ENCODE measurements at regions of chr11 and their contacts with region 1.

Region 1: DNA sequence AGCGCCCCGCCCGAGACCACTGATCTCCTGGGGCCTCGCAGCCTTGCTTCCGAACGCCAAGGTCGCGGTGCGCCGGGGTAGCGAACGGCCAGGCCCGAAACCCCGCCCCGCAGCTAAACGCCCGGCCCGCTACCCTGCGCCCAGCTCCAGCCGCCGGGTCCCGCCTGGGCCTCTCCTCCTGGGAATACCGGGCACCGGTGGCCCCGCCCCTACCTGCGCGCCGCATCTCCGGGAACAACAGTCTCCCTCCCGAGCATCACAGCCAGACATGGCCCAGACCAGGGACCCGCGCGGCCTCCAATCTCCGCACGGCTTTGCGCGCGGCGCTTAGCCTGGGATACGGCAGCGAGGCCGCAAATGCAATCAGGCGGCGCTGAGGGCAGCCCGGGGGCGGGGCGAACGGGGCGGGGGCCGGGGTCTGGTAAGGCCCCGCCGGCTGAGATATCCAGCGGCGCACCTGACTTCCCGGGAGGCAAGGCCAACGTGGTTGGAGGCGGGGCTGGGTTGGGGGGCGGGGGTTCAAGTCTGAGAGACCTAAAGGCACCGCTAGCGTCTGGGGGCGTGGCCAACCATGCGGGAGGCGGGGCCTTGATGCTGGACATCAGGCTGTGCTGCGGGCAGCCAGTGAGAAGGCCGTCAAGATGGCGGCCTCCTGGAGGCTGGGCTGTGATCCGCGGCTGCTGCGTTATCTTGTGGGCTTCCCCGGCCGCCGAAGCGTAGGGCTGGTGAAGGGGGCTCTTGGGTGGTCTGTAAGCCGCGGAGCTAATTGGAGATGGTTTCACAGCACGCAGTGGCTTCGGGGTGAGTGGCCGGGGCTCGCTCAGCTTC is at the starts of genes APIP and PDHX:
- DNase-seq: peak; percentile 77 to 97 (median 83)
- ATAC-seq: peak; percentile 94
- H3K4me3 ChIP-seq: peak within 1 kb of the TSS; percentile 87
- H3K4me3 Mint-ChIP-seq: peak within 1 kb of the TSS; percentile 90 to 99 (median 96)
- H3K27ac ChIP-seq: peak within 1 kb of the TSS; percentile 92
- H3K27ac Mint-ChIP-seq: peak within 1 kb of the TSS; percentile 86 to 98 (median 95)
- H3K4me1 ChIP-seq: peaks cover 9 to 18% of the 10 kb centered on the region in 2 donors
- H3K4me1 Mint-ChIP-seq: peaks cover 36 to 71% (median 57%) of the 10 kb centered on the region in 7 donors
- H3K27me3 ChIP-seq: no peaks in the 10 kb centered on the region
- H3K27me3 Mint-ChIP-seq: no peaks in the 10 kb centered on the region
- total RNA-seq, gene APIP: 8.2 to 23.6 (median 17.7) TPM
- total RNA-seq, gene PDHX: 20.0 to 54.1 (median 28.8) TPM

Region 2: GRCh38 chr11:33773987-33774735 is 1142.1 kb before region 1 on chr11 and contains the start of gene FBXO3:
- CTCF ChIA-PET with region 1: no interaction called
- POLR2A ChIA-PET with region 1: no interaction called
- intact Hi-C with region 1: loop called (anchors 5 to 10 kb)
- DNase-seq: peak; percentile 71 to 91 (median 88)
- ATAC-seq: peak; percentile 98
- H3K4me3 ChIP-seq: peak within 1 kb of the TSS; percentile 91
- H3K4me3 Mint-ChIP-seq: peak within 1 kb of the TSS; percentile 93 to 99 (median 97)
- H3K27ac ChIP-seq: peak within 1 kb of the TSS; percentile 83
- H3K27ac Mint-ChIP-seq: peak within 1 kb of the TSS; percentile 93 to 98 (median 96)
- H3K4me1 ChIP-seq: peaks cover 20 to 23% of the 10 kb centered on the region in 2 donors
- H3K4me1 Mint-ChIP-seq: peaks cover 33 to 58% (median 45%) of the 10 kb centered on the region in 7 donors
- H3K27me3 ChIP-seq: no peaks in the 10 kb centered on the region
- H3K27me3 Mint-ChIP-seq: peaks cover 0 to 34% (median 7%) of the 10 kb centered on the region in 5 donors
- total RNA-seq, gene FBXO3: 22.6 to 55.7 (median 47.7) TPM

Region 3: GRCh38 chr11:34357701-34358257 is 558.5 kb before region 1 on chr11 and contains the start of gene ABTB2:
- CTCF ChIA-PET with region 1: no interaction called
- POLR2A ChIA-PET with region 1: no interaction called
- intact Hi-C with region 1: loop called (anchors 1 to 5 kb)
- DNase-seq: peak; percentile 90 to 97 (median 97)
- ATAC-seq: peak; percentile 96
- H3K4me3 ChIP-seq: peak within 1 kb of the TSS; percentile 67
- H3K4me3 Mint-ChIP-seq: peak within 1 kb of the TSS; percentile 81 to 96 (median 88)
- H3K27ac ChIP-seq: peak within 1 kb of the TSS; percentile 55
- H3K27ac Mint-ChIP-seq: peak within 1 kb of the TSS; percentile 28 to 94 (median 90)
- H3K4me1 ChIP-seq: peaks cover 8 to 10% of the 10 kb centered on the region in 2 donors
- H3K4me1 Mint-ChIP-seq: peaks cover 8 to 28% (median 21%) of the 10 kb centered on the region in 7 donors
- H3K27me3 ChIP-seq: peaks cover 7 to 13% of the 10 kb centered on the region in 2 donors
- H3K27me3 Mint-ChIP-seq: peaks cover 26 to 59% (median 36%) of the 10 kb centered on the region in 5 donors
- total RNA-seq, gene ABTB2: 0.22 to 5.3 (median 0.61) TPM

Region 4: GRCh38 chr11:35040221-35040942 is 124.2 kb after region 1 on chr11:
- CTCF ChIA-PET with region 1: no interaction called
- POLR2A ChIA-PET with region 1: no interaction called
- intact Hi-C with region 1: loop called in 1 of 2 experiments (anchors 5 kb)
- DNase-seq: peak in 8 of 9 donors; percentile 53 to 89 (median 74)
- ATAC-seq: peak; percentile 88
- H3K4me3 ChIP-seq: peak overlapping the region; percentile 60
- H3K4me3 Mint-ChIP-seq: peak overlapping the region; percentile 74 to 94 (median 89)
- H3K27ac ChIP-seq: peak overlapping the region; percentile 86
- H3K27ac Mint-ChIP-seq: peak overlapping the region; percentile 90 to 99 (median 97)
- H3K4me1 ChIP-seq: peaks cover 29 to 45% of the 10 kb centered on the region in 2 donors
- H3K4me1 Mint-ChIP-seq: peaks cover 28 to 77% (median 68%) of the 10 kb centered on the region in 7 donors
- H3K27me3 ChIP-seq: no peaks in the 10 kb centered on the region
- H3K27me3 Mint-ChIP-seq: peaks cover 0 to 29% (median 0%) of the 10 kb centered on the region in 5 donors

Region 5: GRCh38 chr11:35165423-35166368 is 249.5 kb after region 1 on chr11:
- CTCF ChIA-PET with region 1: no interaction called
- POLR2A ChIA-PET with region 1: interaction called, 5 read pairs
- intact Hi-C with region 1: loop called (anchors 1 to 5 kb)
- DNase-seq: peak; percentile 39 to 99 (median 98)
- ATAC-seq: peak; percentile 81
- H3K4me3 ChIP-seq: peak overlapping the region; percentile 49
- H3K4me3 Mint-ChIP-seq: peak overlapping the region; percentile 69 to 94 (median 85)
- H3K27ac ChIP-seq: peak overlapping the region; percentile 94
- H3K27ac Mint-ChIP-seq: peak overlapping the region; percentile 89 to 100 (median 100)
- H3K4me1 ChIP-seq: peaks cover 96% of the 10 kb centered on the region in 2 donors
- H3K4me1 Mint-ChIP-seq: peaks cover 66 to 100% (median 100%) of the 10 kb centered on the region in 7 donors
- H3K27me3 ChIP-seq: no peaks in the 10 kb centered on the region
- H3K27me3 Mint-ChIP-seq: no peaks in the 10 kb centered on the region

Region 6: DNA sequence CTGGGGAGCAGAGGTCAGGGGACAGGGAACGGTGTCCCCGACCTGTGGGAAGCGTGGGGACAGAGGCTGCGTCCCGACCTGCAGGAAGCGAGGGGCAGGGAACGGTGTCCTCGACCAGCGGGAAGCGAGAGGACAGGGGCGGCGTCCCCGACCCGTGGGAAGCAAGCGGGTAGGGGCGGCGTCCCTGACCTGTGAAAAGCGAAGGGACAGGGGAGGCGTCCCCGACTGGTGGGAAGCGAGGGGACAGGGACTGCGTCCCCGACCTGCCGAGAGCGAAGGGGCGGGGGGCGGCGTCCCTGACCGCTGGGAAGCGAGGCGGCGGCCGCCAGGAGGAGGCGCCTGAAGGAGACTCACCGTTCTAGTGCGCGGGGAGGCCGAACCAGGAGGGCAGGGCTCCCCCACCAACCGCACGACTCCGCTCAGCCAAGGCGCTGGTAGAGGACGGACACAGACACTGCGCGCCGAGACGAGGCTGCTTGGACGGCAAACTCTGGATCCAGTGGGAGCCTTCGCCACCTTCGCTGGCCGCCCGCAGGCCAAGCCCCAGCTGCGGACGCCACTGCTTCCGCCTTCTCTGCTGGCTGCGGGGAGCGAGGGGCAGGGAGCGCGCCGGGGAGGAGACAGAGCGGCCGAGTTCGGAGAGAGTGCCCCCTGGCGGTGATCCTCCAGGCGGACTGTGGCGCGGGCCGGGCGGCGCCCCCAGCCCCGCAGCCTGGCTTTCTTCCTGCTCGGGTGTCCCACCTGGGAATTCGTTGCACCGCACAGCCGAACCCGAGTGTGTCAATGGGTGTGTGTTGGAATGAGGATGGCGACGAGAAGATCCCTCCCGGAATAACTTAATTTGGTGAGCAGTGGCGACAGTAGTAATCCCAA is 1593.7 kb after region 1 on chr11 and contains the start of gene TRAF6:
- CTCF ChIA-PET with region 1: no interaction called
- POLR2A ChIA-PET with region 1: no interaction called
- intact Hi-C with region 1: loop called in 1 of 2 experiments (anchors 5 kb)
- DNase-seq: peak; percentile 75 to 95 (median 87)
- ATAC-seq: peak; percentile 99
- H3K4me3 ChIP-seq: peak within 1 kb of the TSS; percentile 82
- H3K4me3 Mint-ChIP-seq: peak within 1 kb of the TSS; percentile 89 to 99 (median 97)
- H3K27ac ChIP-seq: peak within 1 kb of the TSS; percentile 84
- H3K27ac Mint-ChIP-seq: peak within 1 kb of the TSS; percentile 87 to 98 (median 94)
- H3K4me1 ChIP-seq: peaks cover 5 to 13% of the 10 kb centered on the region in 2 donors
- H3K4me1 Mint-ChIP-seq: peaks cover 21 to 42% (median 31%) of the 10 kb centered on the region in 7 donors
- H3K27me3 ChIP-seq: no peaks in the 10 kb centered on the region
- H3K27me3 Mint-ChIP-seq: peaks cover 3 to 23% (median 9%) of the 10 kb centered on the region in 5 donors
- total RNA-seq, gene TRAF6: 14.7 to 22.2 (median 20.6) TPM